A549 (cell line): ENCODE measurements at regions of chr5 and their contacts with region 1.

Region 1: GRCh38 chr5:71601222-71602041 is 14.3 kb downstream of the MCCC2 start:
- DNase-seq: peak; percentile 75 to 80
- ATAC-seq: peak; percentile 98
- H3K4me3 ChIP-seq: no peak overlapping the region
- H3K27ac ChIP-seq: peak overlapping the region; percentile 31 to 71; a peak in 5 of 6 replicates
- H3K4me1 ChIP-seq: peaks cover 29% of the 10 kb centered on the region
- CTCF ChIP-seq: peak; percentile 69
- EP300 ChIP-seq: 0 out of 5 replicates have a peak, but pooled peaks of 1 of the 2 experiments have one; percentile 17
- POLR2A ChIP-seq: no peak
- RAD21 ChIP-seq: peak; percentile 26 to 31

Region 2: DNA sequence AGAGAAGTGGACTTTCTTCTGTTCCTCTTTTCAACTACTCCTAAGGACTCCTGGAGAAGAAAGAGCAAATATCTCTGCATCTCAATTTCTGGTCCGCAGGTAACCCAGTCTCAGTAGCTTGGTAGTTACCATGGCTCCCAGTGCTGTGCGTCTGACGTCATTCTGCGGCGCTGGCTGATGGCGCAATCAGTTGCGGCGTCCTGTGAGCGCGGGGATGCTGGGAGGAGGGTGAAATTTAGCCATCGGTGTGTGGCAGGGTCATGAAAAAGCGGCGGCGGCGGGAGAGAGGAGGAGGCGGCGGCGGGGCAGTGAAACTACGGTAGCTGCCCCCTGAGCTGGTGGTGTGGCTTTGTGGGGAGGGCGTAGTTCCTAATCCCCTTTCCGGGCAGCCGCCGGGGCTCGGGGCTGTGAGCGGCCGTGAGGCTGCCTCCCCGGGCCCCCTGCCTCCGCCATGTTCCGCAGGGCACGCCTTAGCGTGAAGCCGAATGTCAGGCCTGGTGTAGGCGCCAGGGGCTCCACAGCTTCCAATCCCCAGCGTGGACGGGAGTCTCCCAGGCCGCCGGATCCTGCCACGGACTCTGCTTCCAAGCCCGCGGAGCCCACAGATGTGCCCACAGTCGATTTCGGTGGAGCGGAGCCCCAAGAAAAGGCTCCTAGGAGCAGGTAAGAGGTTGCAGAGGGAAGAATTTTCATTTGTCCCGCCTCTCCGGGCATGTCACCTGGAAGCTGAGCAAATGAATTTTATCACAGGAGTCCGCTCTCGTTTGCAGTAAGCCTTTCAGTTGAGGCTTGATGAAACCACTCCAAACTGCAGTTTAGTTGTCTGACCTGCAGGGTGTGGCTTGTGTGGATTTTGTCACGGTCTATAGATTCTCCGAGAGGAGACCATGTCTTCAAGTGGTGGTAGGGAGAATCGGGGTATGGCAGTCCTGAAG is 145.7 kb before region 1 on chr5 and contains the start of gene BDP1:
- CTCF ChIA-PET with region 1: no interaction called
- POLR2A ChIA-PET with region 1: no interaction called
- DNase-seq: peak; percentile 91 to 95
- ATAC-seq: peak; percentile 97 to 98
- H3K4me3 ChIP-seq: peak within 1 kb of the TSS; percentile 72
- H3K27ac ChIP-seq: peak within 1 kb of the TSS; percentile 86 to 95
- H3K4me1 ChIP-seq: peaks cover 17% of the 10 kb centered on the region; the same call in 1 of the 3 replicates
- CTCF ChIP-seq: peak; percentile 18; the same call in 2 of the 3 replicates
- EP300 ChIP-seq: no peak
- POLR2A ChIP-seq: peak; percentile 74
- RAD21 ChIP-seq: no peak
- polyA plus RNA-seq, gene BDP1: 20.9 and 27.2 TPM in 2 replicates

Region 3: DNA sequence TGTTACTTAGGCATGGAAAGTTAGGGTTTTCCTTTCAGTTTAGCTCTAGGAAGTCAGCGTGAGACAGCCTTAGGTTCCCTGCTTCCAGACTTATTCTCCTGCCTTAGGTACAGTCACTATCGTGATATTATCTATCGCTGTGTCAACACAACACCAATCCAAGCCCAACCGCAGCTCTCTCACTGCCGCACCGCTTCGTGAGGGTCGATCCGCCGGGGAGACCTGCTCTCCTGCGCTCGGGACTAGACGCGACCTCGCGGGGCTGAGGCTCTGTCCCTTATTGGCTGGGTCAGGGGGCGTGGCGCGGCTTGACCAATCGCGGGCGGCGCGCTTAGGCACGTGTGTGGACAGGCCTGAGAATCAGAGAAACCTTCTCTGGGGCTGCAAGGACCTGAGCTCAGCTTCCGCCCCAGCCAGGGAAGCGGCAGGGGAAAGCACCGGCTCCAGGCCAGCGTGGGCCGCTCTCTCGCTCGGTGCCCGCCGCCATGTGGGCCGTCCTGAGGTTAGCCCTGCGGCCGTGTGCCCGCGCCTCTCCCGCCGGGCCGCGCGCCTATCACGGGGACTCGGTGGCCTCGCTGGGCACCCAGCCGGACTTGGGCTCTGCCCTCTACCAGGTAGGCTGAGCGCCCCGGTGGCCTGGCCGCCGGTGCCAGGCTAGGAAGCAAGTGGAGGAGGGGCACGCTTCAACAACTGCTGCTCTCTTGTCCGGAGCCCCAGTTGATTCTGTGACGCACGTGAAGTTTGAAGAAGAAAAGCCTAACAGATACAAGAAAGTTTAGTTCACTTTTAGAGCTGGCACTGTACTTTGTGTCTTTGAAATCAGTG is 14.3 kb before region 1 on chr5 and contains the start of gene MCCC2:
- CTCF ChIA-PET with region 1: interaction called, 28 read pairs
- POLR2A ChIA-PET with region 1: interaction called, 10 read pairs
- DNase-seq: peak; percentile 92 to 97
- ATAC-seq: peak; percentile 100
- H3K4me3 ChIP-seq: peak within 1 kb of the TSS; percentile 59
- H3K27ac ChIP-seq: peak within 1 kb of the TSS; percentile 75 to 91
- H3K4me1 ChIP-seq: peaks cover 15% of the 10 kb centered on the region; the same call in 2 of the 3 replicates
- CTCF ChIP-seq: no peak
- EP300 ChIP-seq: no peak
- POLR2A ChIP-seq: peak; percentile 94
- RAD21 ChIP-seq: no peak
- polyA plus RNA-seq, gene MCCC2: 69.9 and 88.4 TPM in 2 replicates

Region 4: GRCh38 chr5:71757590-71758543 is 156.4 kb after region 1 on chr5:
- CTCF ChIA-PET with region 1: interaction called, 10 read pairs
- POLR2A ChIA-PET with region 1: no interaction called
- DNase-seq: peak; percentile 40 to 80
- ATAC-seq: peak; percentile 100
- H3K4me3 ChIP-seq: peak overlapping the region; percentile 27; the same call in 1 of the 3 replicates
- H3K27ac ChIP-seq: peak overlapping the region; percentile 16 to 24; a peak in 1 of 6 replicates
- H3K4me1 ChIP-seq: peaks cover 7% of the 10 kb centered on the region; the same call in 2 of the 3 replicates
- CTCF ChIP-seq: peak; percentile 90
- EP300 ChIP-seq: no peak
- POLR2A ChIP-seq: no peak
- RAD21 ChIP-seq: peak; percentile 95 to 96